Mammary epithelial cell (primary cell): ENCODE measurements at regions of chr10 and their contacts with region 1.

Region 1: DNA sequence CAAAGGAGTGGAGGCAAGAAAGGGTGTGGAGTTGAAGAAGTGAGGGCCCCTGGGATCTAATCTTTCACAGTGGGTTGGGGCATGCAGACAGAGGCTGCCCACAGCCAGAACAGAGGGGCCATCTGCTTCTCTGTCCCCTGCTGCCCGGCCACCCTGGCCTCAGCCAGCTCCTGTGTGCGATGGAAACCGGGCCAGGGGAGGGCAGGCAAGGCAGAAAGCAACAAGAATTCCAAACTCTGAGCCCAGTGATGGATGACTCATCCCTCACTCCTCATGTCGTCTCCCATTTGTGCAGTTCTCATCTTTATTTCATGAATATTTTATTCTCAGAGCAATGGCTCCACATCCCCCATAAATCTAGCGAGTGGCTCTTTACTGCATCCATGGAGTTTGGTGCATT is 757.1 kb downstream of the GRID1 start:
- DNase-seq: no peak
- H3K4me3 ChIP-seq: no peak overlapping the region
- H3K27ac ChIP-seq: no peak overlapping the region
- H3K4me1 ChIP-seq: no peaks in the 10 kb centered on the region
- H3K27me3 ChIP-seq: no peaks in the 10 kb centered on the region
- CTCF ChIP-seq: no peak

Region 2: DNA sequence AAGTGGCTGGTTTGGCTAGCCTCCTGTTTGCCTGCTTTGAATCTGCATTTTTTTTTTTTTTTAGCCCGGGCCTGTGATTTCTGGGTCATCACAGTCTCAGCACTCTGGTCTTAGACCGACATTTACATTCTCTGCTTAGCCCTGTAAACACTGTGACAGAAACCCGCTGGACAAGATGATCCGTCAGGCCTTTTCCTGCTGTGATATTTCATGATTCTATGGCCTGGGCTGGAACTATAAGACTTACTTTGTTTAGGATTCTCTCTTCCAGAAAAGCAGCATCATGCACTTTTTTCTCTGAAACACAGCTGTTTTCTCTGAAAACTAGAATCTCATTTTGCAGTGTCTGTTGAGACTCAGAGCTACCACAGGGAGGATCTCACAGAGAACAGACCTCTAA is 51.6 kb after region 1 on chr10:
- CTCF ChIA-PET with region 1: no interaction called
- dilution Hi-C with region 1: no loop called
- in situ Hi-C with region 1: no loop called
- intact Hi-C with region 1: no loop called
- DNase-seq: no peak
- H3K4me3 ChIP-seq: no peak overlapping the region
- H3K27ac ChIP-seq: no peak overlapping the region
- H3K4me1 ChIP-seq: no peaks in the 10 kb centered on the region
- H3K27me3 ChIP-seq: no peaks in the 10 kb centered on the region
- CTCF ChIP-seq: no peak

Region 3: DNA sequence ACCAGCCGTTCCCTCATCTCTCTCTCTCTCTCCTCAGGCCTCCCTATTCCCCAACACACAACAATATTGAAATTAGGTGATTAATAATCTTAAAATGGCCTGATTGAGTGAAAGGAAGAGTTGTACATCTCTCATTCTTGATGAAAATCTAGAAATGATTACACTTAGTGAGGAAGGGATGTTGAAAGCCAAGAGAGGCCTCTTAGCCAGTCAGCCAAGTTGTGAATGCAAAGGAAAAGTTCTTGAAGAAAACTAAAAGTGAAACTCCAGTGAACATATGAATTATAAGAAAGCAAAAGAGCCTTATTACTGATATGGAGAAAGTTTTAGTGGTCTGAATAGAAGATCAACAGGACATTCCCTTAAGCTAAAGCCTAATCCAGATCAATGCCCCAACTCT is 62.0 kb after region 1 on chr10:
- CTCF ChIA-PET with region 1: no interaction called
- dilution Hi-C with region 1: loop called (anchors 5 kb)
- in situ Hi-C with region 1: no loop called
- intact Hi-C with region 1: no loop called
- DNase-seq: no peak
- H3K4me3 ChIP-seq: no peak overlapping the region
- H3K27ac ChIP-seq: no peak overlapping the region
- H3K4me1 ChIP-seq: no peaks in the 10 kb centered on the region
- H3K27me3 ChIP-seq: no peaks in the 10 kb centered on the region
- CTCF ChIP-seq: no peak

Region 4: GRCh38 chr10:85976267-85976793 is 366.8 kb after region 1 on chr10:
- CTCF ChIA-PET with region 1: no interaction called
- dilution Hi-C with region 1: no loop called
- in situ Hi-C with region 1: no loop called
- intact Hi-C with region 1: no loop called
- DNase-seq: no peak
- H3K4me3 ChIP-seq: no peak overlapping the region
- H3K27ac ChIP-seq: no peak overlapping the region
- H3K4me1 ChIP-seq: peaks cover 11% of the 10 kb centered on the region
- H3K27me3 ChIP-seq: no peaks in the 10 kb centered on the region
- CTCF ChIP-seq: no peak